Ascending aorta (tissue), 2 donors: ENCODE measurements at regions of chr4 and their contacts with region 1.

Region 1: DNA sequence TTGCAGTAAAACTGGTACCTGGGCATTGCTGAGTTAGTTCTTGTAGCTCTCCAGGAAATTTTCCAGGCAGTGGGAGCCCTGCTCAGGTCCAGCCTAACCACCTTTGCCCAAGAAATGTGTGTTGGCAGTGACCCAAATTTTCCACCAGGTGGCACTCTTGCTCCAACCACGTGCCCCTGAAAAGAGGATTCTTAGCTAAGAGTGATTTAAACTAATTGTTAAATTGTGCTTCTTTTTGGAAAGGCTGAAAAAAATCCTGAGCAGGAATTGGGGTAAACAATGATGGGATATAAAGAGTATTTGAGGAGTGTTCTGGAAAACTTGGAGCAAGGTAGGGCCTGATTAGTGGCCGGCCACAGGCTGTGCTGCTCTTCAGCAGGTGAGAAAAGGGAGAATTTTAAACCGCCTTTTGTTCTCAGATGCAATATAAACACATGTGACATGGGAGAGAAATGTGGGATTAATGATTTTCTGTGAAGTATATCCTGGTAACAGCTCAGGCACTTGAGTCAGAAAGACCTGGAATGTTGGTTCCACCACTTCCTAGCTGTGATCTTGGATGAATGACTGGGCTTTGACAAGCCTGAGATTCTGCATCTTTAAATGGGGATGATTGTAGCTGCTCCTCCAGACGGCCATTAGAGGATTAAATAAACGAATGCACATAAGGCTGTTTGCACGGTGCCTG is 219.6 kb downstream of the PTTG2 start:
- DNase-seq: peak in 1 of 2 donors; percentile 90
- H3K4me3 ChIP-seq: no peak overlapping the region
- H3K27ac ChIP-seq: no peak overlapping the region
- H3K4me1 ChIP-seq: peaks cover 4% of the 10 kb centered on the region in 2 donors
- H3K27me3 ChIP-seq: no peaks in the 10 kb centered on the region
- CTCF ChIP-seq: peak; percentile 88 to 94 (median 88)

Region 2: GRCh38 chr4:38675146-38676121 is 495.6 kb after region 1 on chr4:
- intact Hi-C with region 1: loop called (anchors 1 kb)
- DNase-seq: peak in 1 of 2 donors; percentile 92
- H3K4me3 ChIP-seq: peak overlapping the region in 1 of 2 donors; percentile 51
- H3K27ac ChIP-seq: peak overlapping the region; percentile 91 to 99
- H3K4me1 ChIP-seq: peaks cover 42 to 77% of the 10 kb centered on the region in 2 donors
- H3K27me3 ChIP-seq: no peaks in the 10 kb centered on the region
- CTCF ChIP-seq: peak; percentile 79 to 96 (median 90)

Region 3: DNA sequence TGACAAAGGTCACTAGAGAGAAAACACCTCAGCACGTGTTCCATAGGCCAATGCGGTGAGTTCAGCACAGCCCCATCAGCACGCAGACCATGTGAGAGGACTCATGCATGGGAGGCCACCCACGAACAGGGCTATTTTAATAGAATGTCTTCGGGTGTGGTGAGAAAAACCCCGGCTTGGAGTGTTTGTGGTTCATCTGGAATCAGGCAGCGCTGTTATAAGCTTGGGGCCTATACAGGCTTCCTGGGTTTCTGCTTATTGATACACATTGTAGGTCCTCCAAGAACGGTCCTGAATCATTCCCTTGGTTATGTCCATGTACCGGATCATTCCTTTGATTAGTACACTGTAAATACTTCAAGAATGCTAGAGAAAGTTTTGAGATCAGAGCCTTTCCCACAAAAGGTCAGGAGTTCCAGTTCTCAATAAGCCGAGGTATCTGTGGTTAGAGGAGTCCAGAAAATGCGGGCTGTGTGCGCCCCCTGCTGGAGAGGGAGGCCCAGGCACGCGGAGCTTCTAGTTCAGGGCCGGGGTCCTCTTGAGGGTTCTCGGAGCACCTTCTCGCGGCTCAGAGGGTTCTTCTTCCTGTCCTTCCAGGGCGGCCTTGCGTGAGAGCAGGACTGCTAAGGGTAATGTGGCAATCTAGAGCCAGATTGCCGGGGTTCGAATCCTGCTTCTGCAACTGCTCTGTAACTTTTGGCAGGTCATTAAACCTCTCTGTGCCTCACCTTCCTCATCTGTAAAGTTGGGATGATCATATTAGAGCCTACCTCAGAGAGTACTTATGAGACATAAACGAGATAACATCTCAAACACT is 551.2 kb after region 1 on chr4:
- intact Hi-C with region 1: loop called (anchors 1 kb)
- DNase-seq: peak in 1 of 2 donors; percentile 83
- H3K4me3 ChIP-seq: no peak overlapping the region
- H3K27ac ChIP-seq: no peak overlapping the region
- H3K4me1 ChIP-seq: no peaks in the 10 kb centered on the region
- H3K27me3 ChIP-seq: no peaks in the 10 kb centered on the region
- CTCF ChIP-seq: peak; percentile 82 to 92 (median 89)

Region 4: DNA sequence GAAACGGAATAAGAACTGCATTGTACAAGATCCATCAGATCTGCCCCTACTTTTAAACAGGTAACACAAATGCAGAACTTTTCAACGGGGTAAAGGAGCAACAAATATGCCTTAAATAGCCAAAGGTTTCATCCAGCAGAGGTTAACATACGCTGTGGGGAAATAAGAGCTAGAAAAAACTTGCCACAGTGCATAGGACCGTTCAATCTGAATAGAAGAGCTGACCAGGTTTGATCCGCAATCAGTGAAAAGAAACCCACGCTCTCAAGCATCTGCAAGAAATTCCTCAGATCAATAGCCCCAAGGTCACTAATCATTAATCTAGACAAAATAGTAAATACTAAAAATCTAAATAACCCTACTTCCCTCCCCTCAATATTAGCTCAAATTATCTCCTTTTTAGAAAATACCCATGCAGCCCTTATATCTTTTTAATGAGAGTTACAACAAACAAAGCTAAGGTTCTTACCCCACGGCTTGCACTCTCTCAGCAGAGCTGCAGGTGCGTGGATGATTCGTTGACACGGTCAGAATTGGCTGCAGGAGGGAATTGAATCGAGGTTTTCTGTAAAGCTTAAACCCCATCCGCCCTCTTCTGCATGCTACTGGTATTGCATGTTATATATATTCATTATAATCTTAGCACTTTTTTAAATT is 602.7 kb after region 1 on chr4 and contains the start of gene TLR10:
- intact Hi-C with region 1: loop called (anchors 5 kb)
- DNase-seq: no peak
- H3K4me3 ChIP-seq: no peak within 1 kb of the TSS
- H3K27ac ChIP-seq: no peak within 1 kb of the TSS
- H3K4me1 ChIP-seq: no peaks in the 10 kb centered on the region
- H3K27me3 ChIP-seq: no peaks in the 10 kb centered on the region
- CTCF ChIP-seq: peak; percentile 42 to 70 (median 62)
- total RNA-seq, gene TLR10: not detected

Region 5: GRCh38 chr4:38867478-38868058 is 687.7 kb after region 1 on chr4 and contains the start of gene FAM114A1:
- intact Hi-C with region 1: loop called (anchors 10 kb)
- DNase-seq: peak in 1 of 2 donors; percentile 89
- H3K4me3 ChIP-seq: peak within 1 kb of the TSS; percentile 74 to 83
- H3K27ac ChIP-seq: peak within 1 kb of the TSS; percentile 94 to 96
- H3K4me1 ChIP-seq: peaks cover 0 to 13% of the 10 kb centered on the region in 2 donors
- H3K27me3 ChIP-seq: no peaks in the 10 kb centered on the region
- CTCF ChIP-seq: no peak
- total RNA-seq, gene FAM114A1: 45.7 TPM